CD4-positive, alpha-beta T cell (primary cell): ENCODE measurements at regions of chr4 and their contacts with region 1.

Region 1: GRCh38 chr4:173013232-173013930 is 155.2 kb upstream of the GALNT7 start:
- DNase-seq: peak; percentile 19 to 70 (median 42)
- ATAC-seq: peak; percentile 52
- H3K4me3 ChIP-seq: no peak overlapping the region
- H3K4me3 Mint-ChIP-seq: no peak overlapping the region
- H3K27ac ChIP-seq: no peak overlapping the region
- H3K27ac Mint-ChIP-seq: no peak overlapping the region
- H3K4me1 ChIP-seq: no peaks in the 10 kb centered on the region
- H3K4me1 Mint-ChIP-seq: no peaks in the 10 kb centered on the region
- H3K27me3 ChIP-seq: no peaks in the 10 kb centered on the region
- H3K27me3 Mint-ChIP-seq: no peaks in the 10 kb centered on the region
- CTCF ChIP-seq: peak; percentile 81

Region 2: GRCh38 chr4:173257732-173258717 is 244.6 kb after region 1 on chr4:
- CTCF ChIA-PET with region 1: interaction called, 31 read pairs
- POLR2A ChIA-PET with region 1: interaction called, 11 read pairs
- intact Hi-C with region 1: loop called (anchors 1 kb)
- DNase-seq: peak; percentile 14 to 75 (median 50)
- ATAC-seq: peak; percentile 70
- H3K4me3 ChIP-seq: no peak overlapping the region
- H3K4me3 Mint-ChIP-seq: no peak overlapping the region
- H3K27ac ChIP-seq: no peak overlapping the region
- H3K27ac Mint-ChIP-seq: no peak overlapping the region
- H3K4me1 ChIP-seq: no peaks in the 10 kb centered on the region
- H3K4me1 Mint-ChIP-seq: peaks cover 14% of the 10 kb centered on the region
- H3K27me3 ChIP-seq: no peaks in the 10 kb centered on the region
- H3K27me3 Mint-ChIP-seq: no peaks in the 10 kb centered on the region
- CTCF ChIP-seq: peak; percentile 65

Region 3: GRCh38 chr4:173301518-173302201 is 288.3 kb after region 1 on chr4:
- CTCF ChIA-PET with region 1: interaction called, 31 read pairs
- POLR2A ChIA-PET with region 1: interaction called, 5 read pairs
- intact Hi-C with region 1: loop called in 1 of 2 experiments (anchors 2 kb)
- DNase-seq: peak in 4 of 14 experiments; percentile 19 to 57 (median 45)
- ATAC-seq: peak; percentile 39
- H3K4me3 ChIP-seq: no peak overlapping the region
- H3K4me3 Mint-ChIP-seq: no peak overlapping the region
- H3K27ac ChIP-seq: no peak overlapping the region
- H3K27ac Mint-ChIP-seq: peak overlapping the region; percentile 19
- H3K4me1 ChIP-seq: no peaks in the 10 kb centered on the region
- H3K4me1 Mint-ChIP-seq: peaks cover 7% of the 10 kb centered on the region
- H3K27me3 ChIP-seq: no peaks in the 10 kb centered on the region
- H3K27me3 Mint-ChIP-seq: no peaks in the 10 kb centered on the region
- CTCF ChIP-seq: peak; percentile 80

Region 4: DNA sequence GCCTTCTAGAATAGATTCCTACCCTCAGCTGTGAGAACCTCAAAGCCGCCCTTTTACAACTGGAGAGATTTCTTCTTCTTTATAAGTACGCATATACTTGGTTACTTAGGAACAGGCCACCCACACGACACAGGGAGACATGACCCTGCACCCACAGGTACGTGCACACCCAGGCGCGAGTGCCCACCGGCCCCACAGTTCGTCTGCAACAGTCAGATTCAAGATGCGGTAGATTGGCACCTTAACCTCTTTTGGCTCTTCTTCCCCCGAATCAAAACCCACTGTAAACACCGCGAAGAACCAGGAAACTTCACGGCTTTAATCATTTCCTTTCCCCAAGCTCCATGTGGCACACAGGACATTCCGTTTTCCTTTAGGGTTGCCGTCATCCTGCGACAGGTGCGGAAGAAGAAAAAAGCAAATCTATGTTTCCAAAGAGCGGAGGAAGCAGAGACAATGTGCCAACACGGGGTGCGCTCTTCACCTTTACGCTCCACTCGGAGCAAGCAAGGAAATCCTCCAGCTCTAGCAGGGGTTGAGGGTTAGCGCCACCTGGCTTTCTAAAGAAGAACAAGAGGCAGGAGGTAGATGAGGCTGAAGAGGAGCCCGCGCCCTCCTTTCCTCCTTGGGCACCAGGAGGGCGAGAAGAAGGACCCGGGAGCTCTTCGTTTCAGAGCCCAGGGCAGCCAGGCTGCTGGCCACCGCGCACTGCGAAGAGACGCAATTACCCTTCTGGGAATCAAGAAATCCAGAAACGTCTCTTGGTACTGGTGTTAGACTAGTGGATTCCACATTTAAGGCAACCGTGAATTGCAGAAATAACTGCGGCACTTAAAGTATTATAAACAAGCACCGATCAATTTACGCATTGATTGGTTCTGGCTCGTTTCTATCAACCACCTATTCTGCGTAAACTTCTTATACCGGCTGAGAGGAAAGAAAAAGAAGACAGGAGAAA is 480.9 kb after region 1 on chr4:
- CTCF ChIA-PET with region 1: no interaction called
- POLR2A ChIA-PET with region 1: no interaction called
- intact Hi-C with region 1: loop called in 1 of 2 experiments (anchors 5 kb)
- DNase-seq: peak in 13 of 14 experiments; percentile 17 to 84 (median 40)
- ATAC-seq: peak; percentile 98
- H3K4me3 ChIP-seq: peak overlapping the region; percentile 53
- H3K4me3 Mint-ChIP-seq: peak overlapping the region; percentile 85
- H3K27ac ChIP-seq: no peak overlapping the region
- H3K27ac Mint-ChIP-seq: no peak overlapping the region
- H3K4me1 ChIP-seq: peaks cover 9% of the 10 kb centered on the region
- H3K4me1 Mint-ChIP-seq: peaks cover 22% of the 10 kb centered on the region
- H3K27me3 ChIP-seq: peaks cover 8 to 24% of the 10 kb centered on the region in 2 experiments
- H3K27me3 Mint-ChIP-seq: peaks cover 65% of the 10 kb centered on the region
- CTCF ChIP-seq: peak; percentile 68